ENCODE measurements at regions of chr1 and their contacts with region 1.

Region 1: DNA sequence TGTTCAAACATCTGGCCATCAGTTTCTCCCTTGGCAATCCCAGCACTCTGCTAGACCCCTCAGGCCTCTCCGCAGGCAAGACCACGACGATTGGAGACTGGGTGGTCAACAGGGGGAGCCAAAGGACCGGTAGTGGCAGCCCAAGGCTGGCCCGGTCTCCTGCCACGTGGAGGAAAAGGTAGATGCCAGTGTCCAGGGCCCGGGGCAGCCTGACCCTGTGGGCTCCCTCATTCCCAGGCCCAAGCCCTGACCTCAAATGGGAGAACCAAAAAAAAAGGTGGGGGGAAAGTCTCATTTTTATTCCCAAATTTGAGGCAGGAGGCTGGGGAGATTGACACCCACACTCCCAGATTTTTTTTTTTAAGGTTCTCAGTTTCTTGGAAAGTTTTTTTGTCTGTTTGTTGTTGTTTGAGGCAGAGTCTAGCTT is 24.8 kb downstream of the S100A6 start:
- DNase-seq: peak; percentile 85 to 86 (median 86)
- ATAC-seq: peak; percentile 91
- H3K4me3 ChIP-seq: no peak overlapping the region
- H3K27ac ChIP-seq: no peak overlapping the region
- H3K4me1 ChIP-seq: peaks cover 7 to 21% of the 10 kb centered on the region in 2 experiments; a peak in 3 of 5 replicates
- H3K27me3 ChIP-seq: no peaks in the 10 kb centered on the region
- CTCF ChIP-seq: peak; percentile 95 to 96 (median 95)
- EP300 ChIP-seq: no peak
- POLR2A ChIP-seq: no peak
- RAD21 ChIP-seq: peak; percentile 97

Region 2: DNA sequence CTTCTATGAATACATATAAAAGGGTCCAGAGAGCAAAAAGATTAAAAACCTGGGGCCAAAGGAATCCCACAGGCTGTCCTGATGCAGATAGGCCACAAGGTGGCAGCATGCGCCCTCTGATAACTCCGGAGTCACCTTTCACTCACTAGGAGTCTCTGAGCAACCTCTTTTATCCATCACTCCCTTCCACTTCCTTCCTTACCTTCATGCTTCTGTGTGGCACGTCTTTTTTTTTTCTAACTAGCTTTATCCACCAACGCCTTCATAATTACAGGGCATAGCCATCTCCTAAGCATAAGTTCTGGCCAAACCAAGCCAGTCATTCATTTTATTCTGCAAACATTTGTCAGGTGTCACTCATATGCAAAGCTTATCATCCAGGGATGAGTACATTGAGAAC is 158.5 kb before region 1 on chr1:
- CTCF ChIA-PET with region 1: no interaction called
- POLR2A ChIA-PET with region 1: no interaction called
- in situ Hi-C with region 1: loop called (anchors 5 kb)
- intact Hi-C with region 1: no loop called
- DNase-seq: peak; percentile 79 to 82 (median 80)
- ATAC-seq: peak; percentile 85
- H3K4me3 ChIP-seq: no peak overlapping the region
- H3K27ac ChIP-seq: no peak overlapping the region
- H3K4me1 ChIP-seq: peaks cover 0 to 3% of the 10 kb centered on the region in 2 experiments; a peak in 1 of 5 replicates
- H3K27me3 ChIP-seq: peaks cover 7 to 31% of the 10 kb centered on the region in 2 experiments; a peak in 4 of 5 replicates
- CTCF ChIP-seq: peak; percentile 87 to 97 (median 91)
- EP300 ChIP-seq: no peak
- POLR2A ChIP-seq: no peak
- RAD21 ChIP-seq: peak; percentile 78 to 86

Region 3: GRCh38 chr1:153568367-153569099 is 57.5 kb after region 1 on chr1:
- CTCF ChIA-PET with region 1: interaction called, 58 read pairs
- POLR2A ChIA-PET with region 1: interaction called, 3 read pairs
- in situ Hi-C with region 1: loop called (anchors 10 kb)
- intact Hi-C with region 1: loop called (anchors 1 kb)
- DNase-seq: peak; percentile 89 to 92 (median 90)
- ATAC-seq: peak; percentile 81
- H3K4me3 ChIP-seq: no peak overlapping the region
- H3K27ac ChIP-seq: peak overlapping the region; percentile 63; the same call in 2 of the 3 replicates
- H3K4me1 ChIP-seq: peaks cover 38% of the 10 kb centered on the region in 2 experiments
- H3K27me3 ChIP-seq: no peaks in the 10 kb centered on the region
- CTCF ChIP-seq: peak; percentile 97 to 98 (median 98)
- EP300 ChIP-seq: peak; percentile 49; the same call in 1 of the 2 replicates
- POLR2A ChIP-seq: no peak
- RAD21 ChIP-seq: peak; percentile 99

Region 4: DNA sequence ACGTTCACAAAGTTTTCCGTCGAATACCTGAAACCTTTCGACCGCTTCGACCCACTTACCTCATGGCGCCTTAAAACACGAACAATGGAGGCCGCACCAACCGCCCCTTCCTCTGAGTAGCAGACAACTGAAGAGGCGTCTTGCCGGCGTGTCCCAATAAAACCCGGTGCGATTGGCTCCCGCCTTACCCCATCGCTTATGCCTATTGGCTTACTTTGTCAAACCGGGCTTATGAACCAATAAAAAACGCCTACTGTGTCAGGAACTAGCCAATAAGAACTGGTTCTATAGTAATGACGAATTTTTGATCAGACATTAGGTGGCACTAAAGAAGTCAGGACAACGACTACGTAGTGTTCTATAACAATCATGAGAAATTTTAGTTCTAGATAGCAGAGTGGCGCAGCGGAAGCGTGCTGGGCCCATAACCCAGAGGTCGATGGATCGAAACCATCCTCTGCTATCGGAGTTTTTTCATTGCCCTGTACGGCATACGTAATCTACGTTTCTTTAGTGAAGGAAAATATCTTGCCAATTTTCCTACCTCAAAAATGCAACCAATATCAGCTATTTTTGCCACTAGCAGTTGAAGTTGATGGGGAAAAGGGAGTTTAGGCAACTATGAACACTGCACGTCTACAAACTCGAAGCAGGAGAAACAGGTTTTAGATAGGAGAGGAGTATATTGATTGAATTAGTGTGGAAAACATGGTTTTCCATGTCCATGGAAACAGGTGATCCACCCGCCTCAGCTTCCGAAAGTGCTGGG is 160.0 kb after region 1 on chr1 and contains the start of gene ILF2:
- CTCF ChIA-PET with region 1: no interaction called
- POLR2A ChIA-PET with region 1: interaction called, 3 read pairs
- in situ Hi-C with region 1: no loop called
- intact Hi-C with region 1: loop called (anchors 5 kb)
- DNase-seq: peak; percentile 97 to 100 (median 98)
- ATAC-seq: peak; percentile 95
- H3K4me3 ChIP-seq: peak within 1 kb of the TSS; percentile 94
- H3K27ac ChIP-seq: peak within 1 kb of the TSS; percentile 92
- H3K4me1 ChIP-seq: peaks cover 0 to 4% of the 10 kb centered on the region in 2 experiments; a peak in 3 of 5 replicates
- H3K27me3 ChIP-seq: no peaks in the 10 kb centered on the region
- CTCF ChIP-seq: peak in 2 of 3 experiments; percentile 61 to 63; a peak in 4 of 6 replicates
- EP300 ChIP-seq: peak; percentile 66; the same call in 1 of the 2 replicates
- POLR2A ChIP-seq: peak; percentile 97
- RAD21 ChIP-seq: no peak; a peak in 1 of 4 replicates
- polyA plus RNA-seq, gene ILF2: 459 to 642 TPM

Region 5: DNA sequence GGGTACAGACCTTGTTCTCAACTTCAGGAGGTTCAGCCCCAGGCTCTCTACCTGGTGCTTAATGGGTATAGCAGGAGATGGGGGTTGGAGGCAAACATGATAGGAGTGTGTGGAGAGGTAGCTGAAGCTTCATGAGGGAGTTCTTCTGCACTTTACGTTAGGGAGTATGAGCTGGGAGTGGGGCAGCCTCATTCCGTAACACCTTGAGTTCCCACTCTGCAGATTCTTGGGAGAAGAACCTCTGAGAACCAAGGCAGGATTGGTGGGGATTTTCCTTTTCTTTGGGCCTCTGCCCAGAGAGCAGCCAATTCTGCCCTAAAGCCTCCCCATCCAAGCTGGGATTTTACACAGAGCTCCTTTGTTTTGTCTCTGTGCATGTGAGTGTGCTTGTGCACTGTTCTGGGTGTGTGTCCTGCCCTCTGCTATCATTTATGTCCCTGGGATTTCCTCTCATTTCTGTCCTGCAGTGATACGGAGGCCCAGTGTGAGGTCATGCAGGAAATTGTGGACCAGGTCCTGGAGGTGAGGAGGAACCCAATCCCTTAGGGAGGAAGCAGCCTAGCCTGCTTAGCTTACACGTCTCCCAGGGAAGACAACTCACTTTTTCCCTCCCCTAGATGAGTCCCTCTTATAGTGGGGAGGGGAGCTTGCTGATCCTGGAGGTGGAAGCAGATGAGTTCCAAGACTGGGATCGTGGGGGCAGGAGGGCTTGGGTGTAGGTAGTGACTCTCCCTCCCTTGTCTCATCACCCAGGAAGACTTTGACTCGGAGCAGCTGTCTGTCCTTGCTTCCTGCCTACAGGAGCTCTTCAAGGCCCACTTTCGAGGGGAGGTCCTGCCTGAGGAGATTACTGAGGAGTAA is 252.6 kb after region 1 on chr1:
- CTCF ChIA-PET with region 1: no interaction called
- POLR2A ChIA-PET with region 1: no interaction called
- in situ Hi-C with region 1: loop called (anchors 5 kb)
- intact Hi-C with region 1: no loop called
- DNase-seq: no peak
- ATAC-seq: no peak
- H3K4me3 ChIP-seq: no peak overlapping the region
- H3K27ac ChIP-seq: no peak overlapping the region
- H3K4me1 ChIP-seq: no peaks in the 10 kb centered on the region
- H3K27me3 ChIP-seq: no peaks in the 10 kb centered on the region
- CTCF ChIP-seq: no peak
- EP300 ChIP-seq: no peak
- POLR2A ChIP-seq: no peak
- RAD21 ChIP-seq: no peak